ENCODE measurements at regions of chr17 and their contacts with region 1.

Region 1: GRCh38 chr17:68710035-68710780 is 109.0 kb upstream of the FAM20A start:
- H3K4me3 Mint-ChIP-seq: no peak overlapping the region
- H3K27ac Mint-ChIP-seq: no peak overlapping the region
- H3K4me1 Mint-ChIP-seq: peaks cover 25% of the 10 kb centered on the region
- H3K27me3 Mint-ChIP-seq: peaks cover 15% of the 10 kb centered on the region

Region 2: DNA sequence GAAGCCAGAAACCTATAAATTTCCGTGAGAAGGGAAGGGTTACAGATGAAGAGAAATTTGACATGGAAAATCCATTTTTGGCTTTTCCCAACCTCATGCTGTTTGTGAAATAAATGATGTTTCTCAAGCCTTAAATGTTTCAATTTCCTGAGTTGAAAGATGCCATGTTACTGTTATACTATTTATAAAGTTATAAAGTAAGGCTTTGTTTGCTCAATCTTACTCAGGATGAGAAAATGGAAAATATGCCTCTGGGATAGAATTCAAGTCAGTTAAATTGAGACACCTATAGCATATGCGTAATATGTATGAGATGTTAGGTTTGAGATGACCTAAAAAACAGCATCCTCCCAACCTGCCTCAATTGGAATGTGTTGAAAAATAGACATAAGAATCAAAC is 89.1 kb before region 1 on chr17:
- intact Hi-C with region 1: no loop called
- H3K4me3 Mint-ChIP-seq: no peak overlapping the region
- H3K27ac Mint-ChIP-seq: no peak overlapping the region
- H3K4me1 Mint-ChIP-seq: no peaks in the 10 kb centered on the region
- H3K27me3 Mint-ChIP-seq: peaks cover 14% of the 10 kb centered on the region

Region 3: DNA sequence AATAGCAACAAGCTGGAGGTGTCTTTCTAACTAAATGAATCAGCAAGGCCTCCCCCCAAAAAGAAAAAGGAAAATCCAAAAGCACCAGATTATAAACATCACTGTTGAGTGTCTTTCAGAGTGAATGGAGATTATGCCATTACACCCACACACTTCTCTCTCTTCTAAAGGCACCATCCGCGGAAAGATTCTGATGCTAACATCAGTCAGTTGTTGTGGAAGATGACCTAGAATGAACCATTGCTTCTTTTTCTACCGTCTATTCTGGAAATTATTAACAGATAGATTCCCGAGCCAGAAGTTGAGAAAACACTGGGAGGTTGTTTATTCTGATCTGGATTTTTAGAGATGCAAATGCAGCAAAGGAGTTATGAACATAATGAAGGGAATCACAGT is 48.2 kb before region 1 on chr17:
- intact Hi-C with region 1: loop called (anchors 10 kb)
- H3K4me3 Mint-ChIP-seq: no peak overlapping the region
- H3K27ac Mint-ChIP-seq: no peak overlapping the region
- H3K4me1 Mint-ChIP-seq: no peaks in the 10 kb centered on the region
- H3K27me3 Mint-ChIP-seq: peaks cover 9% of the 10 kb centered on the region